Lower leg skin (tissue), 4 donors: ENCODE measurements at regions of chr2 and their contacts with region 1.

Region 1: DNA sequence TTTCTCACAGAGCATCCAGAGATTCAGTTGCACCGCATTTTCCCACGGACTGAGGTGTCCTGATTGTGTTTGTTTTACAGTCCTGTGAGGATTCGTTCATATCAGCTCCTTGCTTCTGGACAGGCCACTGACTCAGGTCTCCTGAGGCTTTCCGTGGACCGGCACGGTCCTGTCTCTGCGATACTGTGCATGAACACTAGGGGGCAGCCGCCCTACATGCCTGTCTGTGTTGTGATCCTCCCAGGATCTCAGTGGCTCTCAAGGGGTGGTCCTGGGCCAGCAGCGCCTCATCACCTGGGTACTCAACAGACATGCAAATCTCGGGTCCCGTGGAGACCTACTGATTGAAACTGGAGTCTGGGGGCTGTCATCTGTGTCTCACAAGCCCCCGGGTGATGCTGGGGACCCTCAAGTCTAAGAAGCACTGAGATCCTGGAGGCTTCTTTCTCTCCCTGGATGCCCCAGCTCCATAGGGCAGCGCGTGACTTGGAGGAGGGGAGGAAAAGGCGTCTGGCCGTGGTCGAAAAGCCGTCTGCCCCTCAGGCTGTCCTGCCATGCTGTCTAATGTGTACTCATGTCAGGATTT is 28.9 kb downstream of the IL1R2 start:
- DNase-seq: peak; percentile 93 to 98
- H3K4me3 ChIP-seq: no peak overlapping the region
- CTCF ChIP-seq: peak in 2 of 3 donors; percentile 74 to 97
- POLR2A ChIP-seq: no peak

Region 2: GRCh38 chr2:100909534-100910081 is 1111.1 kb before region 1 on chr2:
- intact Hi-C with region 1: no loop called
- DNase-seq: no peak
- H3K4me3 ChIP-seq: no peak overlapping the region
- CTCF ChIP-seq: no peak
- POLR2A ChIP-seq: no peak

Region 3: GRCh38 chr2:101946372-101947039 is 74.2 kb before region 1 on chr2:
- intact Hi-C with region 1: no loop called
- DNase-seq: no peak
- H3K4me3 ChIP-seq: no peak overlapping the region
- CTCF ChIP-seq: no peak
- POLR2A ChIP-seq: no peak

Region 4: GRCh38 chr2:102172745-102173144 is 152.1 kb after region 1 on chr2:
- intact Hi-C with region 1: loop called (anchors 2 kb)
- DNase-seq: no peak
- H3K4me3 ChIP-seq: no peak overlapping the region
- CTCF ChIP-seq: no peak
- POLR2A ChIP-seq: no peak